Mammary epithelial cell (primary cell): ENCODE measurements at regions of chr4 and their contacts with region 1.

Region 1: DNA sequence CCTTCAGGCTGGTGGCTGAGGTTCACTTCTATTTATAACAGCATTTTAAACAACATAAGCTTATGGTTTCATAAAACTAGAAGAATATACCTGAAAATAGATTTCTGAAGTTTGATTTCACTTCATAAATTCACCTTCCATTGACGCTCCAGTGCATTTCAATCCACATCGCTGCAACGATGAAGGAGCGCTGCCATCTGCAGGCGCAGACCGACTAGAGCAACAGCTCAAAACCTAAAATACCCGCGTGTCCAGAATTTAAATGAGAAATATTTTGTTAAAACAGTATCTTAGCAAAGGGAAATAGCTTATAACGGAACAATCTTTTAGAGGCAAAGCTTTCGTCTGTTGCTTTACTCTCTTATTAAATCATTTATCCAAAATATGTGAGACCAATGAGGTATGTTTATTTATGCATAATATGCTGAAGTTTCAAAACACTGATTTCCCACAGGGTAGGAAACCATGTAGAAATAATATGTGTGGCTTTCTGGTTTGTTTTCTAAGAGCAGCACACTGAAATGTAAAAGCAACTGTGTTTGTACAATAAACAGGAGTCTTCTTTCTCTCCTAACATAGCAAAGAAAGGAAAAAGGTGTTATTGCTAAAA is 816.4 kb upstream of the FRG1 start:
- DNase-seq: peak; percentile 33
- H3K4me3 ChIP-seq: no peak overlapping the region
- H3K27ac ChIP-seq: no peak overlapping the region
- H3K4me1 ChIP-seq: peaks cover 4% of the 10 kb centered on the region
- H3K27me3 ChIP-seq: no peaks in the 10 kb centered on the region
- CTCF ChIP-seq: peak; percentile 75 to 83

Region 2: GRCh38 chr4:188400451-188400850 is 723.8 kb before region 1 on chr4:
- CTCF ChIA-PET with region 1: no interaction called
- dilution Hi-C with region 1: no loop called
- in situ Hi-C with region 1: no loop called
- intact Hi-C with region 1: loop called (anchors 10 kb)
- DNase-seq: peak; percentile 80
- H3K4me3 ChIP-seq: peak overlapping the region in 1 of 3 experiments; percentile 43
- H3K27ac ChIP-seq: peak overlapping the region; percentile 85
- H3K4me1 ChIP-seq: peaks cover 45% of the 10 kb centered on the region
- H3K27me3 ChIP-seq: no peaks in the 10 kb centered on the region
- CTCF ChIP-seq: no peak

Region 3: GRCh38 chr4:188781655-188782054 is 342.6 kb before region 1 on chr4:
- CTCF ChIA-PET with region 1: no interaction called
- dilution Hi-C with region 1: no loop called
- in situ Hi-C with region 1: no loop called
- intact Hi-C with region 1: loop called (anchors 1 kb)
- DNase-seq: no peak
- H3K4me3 ChIP-seq: no peak overlapping the region
- H3K27ac ChIP-seq: no peak overlapping the region
- H3K4me1 ChIP-seq: no peaks in the 10 kb centered on the region
- H3K27me3 ChIP-seq: no peaks in the 10 kb centered on the region
- CTCF ChIP-seq: peak in 1 of 2 donors; percentile 33

Region 4: GRCh38 chr4:188971125-188971524 is 153.1 kb before region 1 on chr4:
- CTCF ChIA-PET with region 1: no interaction called
- dilution Hi-C with region 1: no loop called
- in situ Hi-C with region 1: no loop called
- intact Hi-C with region 1: loop called (anchors 1 kb)
- DNase-seq: peak; percentile 35
- H3K4me3 ChIP-seq: no peak overlapping the region
- H3K27ac ChIP-seq: no peak overlapping the region
- H3K4me1 ChIP-seq: peaks cover 1% of the 10 kb centered on the region
- H3K27me3 ChIP-seq: no peaks in the 10 kb centered on the region
- CTCF ChIP-seq: peak; percentile 42 to 62

Region 5: GRCh38 chr4:189792924-189793618 is 668.8 kb after region 1 on chr4:
- CTCF ChIA-PET with region 1: no interaction called
- dilution Hi-C with region 1: no loop called
- in situ Hi-C with region 1: no loop called
- intact Hi-C with region 1: loop called (anchors 2 kb)
- DNase-seq: peak; percentile 52
- H3K4me3 ChIP-seq: no peak overlapping the region
- H3K27ac ChIP-seq: no peak overlapping the region
- H3K4me1 ChIP-seq: no peaks in the 10 kb centered on the region
- H3K27me3 ChIP-seq: no peaks in the 10 kb centered on the region
- CTCF ChIP-seq: peak; percentile 93 to 94